PC-9 (cell line): ENCODE measurements at regions of chr3 and their contacts with region 1.

Region 1: DNA sequence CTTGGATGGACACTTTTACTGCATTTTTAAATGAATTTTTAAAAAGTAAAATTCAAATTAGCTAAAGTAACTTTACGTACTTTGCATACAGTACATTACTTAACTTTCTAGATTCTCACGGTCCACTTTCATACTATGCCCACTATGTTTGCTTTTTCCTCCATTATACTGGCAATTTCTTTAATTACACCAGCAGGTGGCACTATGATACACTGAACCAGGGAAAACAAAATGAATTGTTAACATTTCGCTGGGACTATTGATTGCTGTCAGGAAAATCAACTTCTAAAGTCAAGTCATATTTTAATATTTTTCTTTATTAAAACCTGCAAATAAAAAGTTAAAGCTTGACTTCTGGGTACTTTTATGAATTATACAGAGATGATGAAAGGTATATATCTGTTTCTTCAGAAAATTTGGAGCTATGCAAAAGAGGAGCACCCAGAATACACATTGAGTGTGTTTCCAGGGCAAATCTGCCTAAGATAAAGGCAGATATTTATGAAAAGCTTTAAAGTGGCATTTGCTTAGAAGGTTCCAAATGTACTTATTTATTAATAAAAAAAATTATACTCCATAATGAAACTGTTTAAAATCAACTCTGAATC is 21.8 kb upstream of the POU1F1 start:
- DNase-seq: no peak
- H3K4me3 ChIP-seq: no peak overlapping the region
- H3K27ac ChIP-seq: no peak overlapping the region
- H3K4me1 ChIP-seq: no peaks in the 10 kb centered on the region
- H3K27me3 ChIP-seq: no peaks in the 10 kb centered on the region
- CTCF ChIP-seq: peak; percentile 89

Region 2: DNA sequence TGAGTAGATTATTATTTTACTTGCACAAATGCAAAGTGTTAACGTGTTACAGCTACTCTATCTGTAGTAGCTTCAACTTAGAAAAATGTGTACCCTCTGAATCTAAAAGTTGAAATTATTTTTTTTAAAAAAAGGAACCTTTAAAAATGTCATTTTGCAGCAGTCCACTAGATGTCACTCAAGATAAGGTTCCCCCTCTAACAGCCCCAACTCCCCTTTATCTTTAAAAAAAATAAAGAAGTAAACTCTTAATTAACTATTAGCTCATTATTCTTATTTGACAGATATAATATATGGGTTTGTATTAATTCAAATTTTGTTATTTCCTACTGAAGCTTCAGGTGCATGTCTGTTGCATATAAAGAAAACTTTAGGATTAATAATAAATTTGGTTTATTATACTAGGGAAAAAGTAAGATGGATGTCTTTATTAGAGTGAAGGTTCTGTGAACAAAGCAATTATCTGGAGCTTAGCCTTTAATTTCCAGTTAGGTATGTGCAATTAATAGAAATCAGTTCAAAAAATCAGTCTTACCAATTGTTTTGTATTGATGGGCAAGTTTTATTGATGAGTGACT is 595.7 kb before region 1 on chr3:
- CTCF ChIA-PET with region 1: no interaction called
- POLR2A ChIA-PET with region 1: no interaction called
- intact Hi-C with region 1: loop called (anchors 2 kb)
- DNase-seq: no peak
- H3K4me3 ChIP-seq: no peak overlapping the region
- H3K27ac ChIP-seq: no peak overlapping the region
- H3K4me1 ChIP-seq: no peaks in the 10 kb centered on the region
- H3K27me3 ChIP-seq: no peaks in the 10 kb centered on the region
- CTCF ChIP-seq: peak; percentile 75

Region 3: DNA sequence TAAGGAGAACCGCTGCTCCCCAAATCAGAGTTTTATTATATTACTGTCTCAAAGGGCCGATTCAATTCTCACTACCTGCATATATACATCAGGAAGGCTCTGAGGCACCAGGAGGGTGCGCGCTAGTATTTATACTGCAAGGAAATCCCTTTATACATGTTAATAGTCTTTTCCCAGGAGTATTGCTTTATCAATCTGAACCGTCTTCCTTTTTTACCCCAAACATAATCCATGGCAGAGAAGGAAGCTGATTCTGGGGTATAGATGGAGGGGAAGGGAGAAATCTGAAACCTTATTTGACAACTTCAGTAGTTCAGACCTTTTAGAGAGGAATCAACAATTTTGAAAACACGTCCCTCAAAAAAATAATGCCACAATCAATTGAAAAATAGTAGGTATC is 21.7 kb before region 1 on chr3 and contains the start of gene POU1F1:
- CTCF ChIA-PET with region 1: no interaction called
- POLR2A ChIA-PET with region 1: no interaction called
- intact Hi-C with region 1: no loop called
- DNase-seq: no peak
- H3K4me3 ChIP-seq: no peak within 1 kb of the TSS
- H3K27ac ChIP-seq: no peak within 1 kb of the TSS
- H3K4me1 ChIP-seq: no peaks in the 10 kb centered on the region
- H3K27me3 ChIP-seq: no peaks in the 10 kb centered on the region
- CTCF ChIP-seq: no peak
- total RNA-seq, gene POU1F1: not detected in 2 replicates

Region 4: GRCh38 chr3:87350364-87351199 is 52.4 kb after region 1 on chr3:
- CTCF ChIA-PET with region 1: interaction called, 8 read pairs
- POLR2A ChIA-PET with region 1: no interaction called
- intact Hi-C with region 1: loop called (anchors 1 kb)
- DNase-seq: peak in 1 of 2 experiments; percentile 48
- H3K4me3 ChIP-seq: no peak overlapping the region
- H3K27ac ChIP-seq: no peak overlapping the region
- H3K4me1 ChIP-seq: no peaks in the 10 kb centered on the region
- H3K27me3 ChIP-seq: no peaks in the 10 kb centered on the region
- CTCF ChIP-seq: peak; percentile 88